Activated CD4-positive, alpha-beta memory T cell treated with anti-CD3 and anti-CD28 coated beads, Interleukin-2, amount 10 ng/mL, durations not matched to agents 7 days and 5 days (primary cell): ENCODE measurements at regions of chr5 and their contacts with region 1.

Region 1: GRCh38 chr5:139633295-139634027 is 14.7 kb upstream of the CXXC5 start:
- DNase-seq: peak; percentile 69
- H3K4me3 Mint-ChIP-seq: no peak overlapping the region
- H3K27ac Mint-ChIP-seq: peak overlapping the region; percentile 10
- H3K4me1 Mint-ChIP-seq: peaks cover 44% of the 10 kb centered on the region
- H3K27me3 Mint-ChIP-seq: no peaks in the 10 kb centered on the region

Region 2: DNA sequence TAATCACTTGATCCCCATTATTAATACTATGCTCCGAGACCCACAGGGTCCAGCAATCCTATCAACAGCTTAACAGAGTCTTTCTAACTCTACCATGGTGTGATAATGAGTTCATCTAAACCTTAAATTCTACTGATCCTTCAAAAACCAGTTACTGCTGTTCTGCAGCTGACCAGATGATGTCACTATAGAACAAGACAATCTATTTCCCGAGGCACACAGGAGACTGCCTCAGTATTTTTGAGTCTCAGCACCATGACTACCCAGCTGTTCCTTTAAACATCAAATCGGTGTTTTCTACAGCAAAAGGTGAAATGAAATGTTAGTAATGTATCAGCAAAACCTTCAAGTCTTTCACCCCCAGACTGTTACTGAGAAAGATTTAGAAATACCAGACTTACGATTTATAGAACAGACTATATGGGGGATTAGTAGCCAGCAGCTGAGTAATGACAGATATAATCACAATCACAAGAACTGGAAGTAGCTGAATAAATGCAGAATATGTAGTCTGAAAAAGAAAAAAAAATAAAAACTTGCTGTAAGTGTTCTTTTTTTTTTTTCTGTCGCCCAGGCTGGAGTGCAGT is 211.1 kb before region 1 on chr5:
- CTCF ChIA-PET with region 1: interaction called, 10 read pairs
- POLR2A ChIA-PET with region 1: no interaction called
- DNase-seq: peak; percentile 59
- H3K4me3 Mint-ChIP-seq: no peak overlapping the region
- H3K27ac Mint-ChIP-seq: peak overlapping the region; percentile 36
- H3K4me1 Mint-ChIP-seq: peaks cover 46% of the 10 kb centered on the region
- H3K27me3 Mint-ChIP-seq: no peaks in the 10 kb centered on the region

Region 3: GRCh38 chr5:139560752-139561654 is 72.5 kb before region 1 on chr5 and contains the start of gene UBE2D2:
- CTCF ChIA-PET with region 1: interaction called, 25 read pairs
- POLR2A ChIA-PET with region 1: interaction called, 12 read pairs
- DNase-seq: peak; percentile 98
- H3K4me3 Mint-ChIP-seq: peak within 1 kb of the TSS; percentile 95
- H3K27ac Mint-ChIP-seq: peak within 1 kb of the TSS; percentile 95
- H3K4me1 Mint-ChIP-seq: peaks cover 36% of the 10 kb centered on the region
- H3K27me3 Mint-ChIP-seq: no peaks in the 10 kb centered on the region
- total RNA-seq, gene UBE2D2: 241 to 244 TPM

Region 4: GRCh38 chr5:139574641-139575312 is 58.7 kb before region 1 on chr5:
- CTCF ChIA-PET with region 1: interaction called, 12 read pairs
- POLR2A ChIA-PET with region 1: no interaction called
- DNase-seq: no peak
- H3K4me3 Mint-ChIP-seq: no peak overlapping the region
- H3K27ac Mint-ChIP-seq: peak overlapping the region; percentile 53
- H3K4me1 Mint-ChIP-seq: peaks cover 69% of the 10 kb centered on the region
- H3K27me3 Mint-ChIP-seq: no peaks in the 10 kb centered on the region

Region 5: GRCh38 chr5:139648205-139649081 is 15.0 kb after region 1 on chr5 and contains the start of gene CXXC5:
- CTCF ChIA-PET with region 1: interaction called, 9 read pairs
- POLR2A ChIA-PET with region 1: interaction called, 12 read pairs
- DNase-seq: peak; percentile 45
- H3K4me3 Mint-ChIP-seq: peak within 1 kb of the TSS; percentile 17
- H3K27ac Mint-ChIP-seq: no peak within 1 kb of the TSS
- H3K4me1 Mint-ChIP-seq: peaks cover 35% of the 10 kb centered on the region
- H3K27me3 Mint-ChIP-seq: peaks cover 68% of the 10 kb centered on the region
- total RNA-seq, gene CXXC5: 1.4 to 1.7 TPM

Region 6: DNA sequence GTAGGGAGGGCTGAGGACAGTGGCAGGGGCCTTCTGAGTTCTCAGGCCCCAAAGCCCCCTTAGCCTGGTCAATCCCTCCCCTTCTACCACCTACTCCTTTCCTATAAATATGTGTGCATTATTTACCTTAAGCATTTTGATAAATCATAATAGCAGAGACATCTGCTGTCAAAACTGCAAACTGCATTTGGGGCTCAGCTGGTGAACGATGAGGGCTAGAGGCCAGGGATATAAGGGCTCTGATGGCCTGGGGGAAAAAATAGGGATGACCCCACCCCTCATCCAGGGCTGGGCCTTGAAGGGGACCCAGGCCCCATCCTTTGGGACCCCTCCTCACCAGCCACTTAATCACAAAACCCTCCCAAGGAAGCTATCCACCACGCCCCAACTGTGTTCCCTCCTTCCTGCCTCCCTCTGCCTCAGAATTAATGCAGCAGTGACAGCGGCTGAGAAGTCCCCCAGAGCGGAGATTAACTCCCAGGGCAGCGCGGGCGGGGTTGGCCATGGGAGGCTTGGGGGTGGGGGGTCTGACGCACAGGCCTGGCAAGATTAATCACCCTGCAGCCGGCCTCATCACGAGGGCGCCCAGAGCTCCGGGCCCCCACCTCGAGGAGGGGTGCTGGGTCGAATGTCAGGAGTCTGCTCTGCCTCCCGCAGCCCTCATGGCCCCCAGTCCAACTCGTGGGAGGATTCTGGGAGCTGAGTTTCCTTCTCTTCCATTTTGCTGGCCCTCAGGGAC is 56.8 kb after region 1 on chr5:
- CTCF ChIA-PET with region 1: interaction called, 73 read pairs
- POLR2A ChIA-PET with region 1: interaction called, 6 read pairs
- DNase-seq: no peak
- H3K4me3 Mint-ChIP-seq: no peak overlapping the region
- H3K27ac Mint-ChIP-seq: no peak overlapping the region
- H3K4me1 Mint-ChIP-seq: no peaks in the 10 kb centered on the region
- H3K27me3 Mint-ChIP-seq: peaks cover 6% of the 10 kb centered on the region

Region 7: DNA sequence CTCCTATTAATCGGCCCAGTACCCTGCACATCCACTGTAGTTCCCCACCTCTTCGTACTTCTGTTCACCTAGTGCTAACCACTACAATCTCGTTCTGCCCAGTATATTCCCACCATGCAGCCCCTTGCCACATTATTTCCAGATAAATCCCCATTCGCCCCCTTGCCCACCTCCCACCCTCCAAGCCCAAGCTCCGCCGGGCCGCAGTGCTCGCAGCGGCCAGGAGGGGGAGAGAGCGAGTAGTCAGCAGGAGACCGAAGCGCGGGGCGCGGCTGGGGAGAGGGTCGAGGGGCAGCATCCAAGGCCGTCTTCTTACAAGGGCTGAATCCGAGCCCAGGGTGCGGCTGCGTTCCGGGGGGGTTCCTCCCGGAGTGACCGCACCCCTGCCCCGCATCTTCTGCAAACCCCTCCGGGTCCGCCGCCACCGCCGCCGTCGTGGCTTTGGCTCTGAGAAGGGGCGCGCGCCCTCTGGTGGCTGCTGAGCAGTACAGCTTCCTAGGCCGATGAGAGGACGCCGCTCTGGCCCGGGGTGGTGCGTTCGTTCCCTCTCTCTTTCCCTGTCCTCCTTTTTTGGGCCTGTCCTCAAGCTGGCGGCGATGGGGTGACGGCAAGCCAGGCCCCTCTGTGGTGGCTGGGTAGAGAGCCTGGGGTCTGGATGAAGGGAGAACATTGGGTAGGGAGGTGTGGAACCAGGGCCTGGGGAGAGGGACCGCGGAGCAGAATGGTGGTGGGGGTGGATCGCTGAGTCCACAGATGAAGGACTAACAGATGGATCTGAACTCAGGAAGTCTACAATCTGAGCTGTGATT is 132.2 kb after region 1 on chr5:
- CTCF ChIA-PET with region 1: interaction called, 49 read pairs
- POLR2A ChIA-PET with region 1: interaction called, 4 read pairs
- DNase-seq: peak; percentile 83
- H3K4me3 Mint-ChIP-seq: peak overlapping the region; percentile 64
- H3K27ac Mint-ChIP-seq: no peak overlapping the region
- H3K4me1 Mint-ChIP-seq: peaks cover 9% of the 10 kb centered on the region
- H3K27me3 Mint-ChIP-seq: peaks cover 38% of the 10 kb centered on the region

Region 8: GRCh38 chr5:139847790-139848507 is 214.5 kb after region 1 on chr5:
- CTCF ChIA-PET with region 1: no interaction called
- POLR2A ChIA-PET with region 1: no interaction called
- DNase-seq: peak; percentile 77
- H3K4me3 Mint-ChIP-seq: peak overlapping the region; percentile 53
- H3K27ac Mint-ChIP-seq: no peak overlapping the region
- H3K4me1 Mint-ChIP-seq: peaks cover 8% of the 10 kb centered on the region
- H3K27me3 Mint-ChIP-seq: peaks cover 39% of the 10 kb centered on the region